WTC11 (cell line): ENCODE measurements at regions of chr10 and their contacts with region 1.

Region 1: DNA sequence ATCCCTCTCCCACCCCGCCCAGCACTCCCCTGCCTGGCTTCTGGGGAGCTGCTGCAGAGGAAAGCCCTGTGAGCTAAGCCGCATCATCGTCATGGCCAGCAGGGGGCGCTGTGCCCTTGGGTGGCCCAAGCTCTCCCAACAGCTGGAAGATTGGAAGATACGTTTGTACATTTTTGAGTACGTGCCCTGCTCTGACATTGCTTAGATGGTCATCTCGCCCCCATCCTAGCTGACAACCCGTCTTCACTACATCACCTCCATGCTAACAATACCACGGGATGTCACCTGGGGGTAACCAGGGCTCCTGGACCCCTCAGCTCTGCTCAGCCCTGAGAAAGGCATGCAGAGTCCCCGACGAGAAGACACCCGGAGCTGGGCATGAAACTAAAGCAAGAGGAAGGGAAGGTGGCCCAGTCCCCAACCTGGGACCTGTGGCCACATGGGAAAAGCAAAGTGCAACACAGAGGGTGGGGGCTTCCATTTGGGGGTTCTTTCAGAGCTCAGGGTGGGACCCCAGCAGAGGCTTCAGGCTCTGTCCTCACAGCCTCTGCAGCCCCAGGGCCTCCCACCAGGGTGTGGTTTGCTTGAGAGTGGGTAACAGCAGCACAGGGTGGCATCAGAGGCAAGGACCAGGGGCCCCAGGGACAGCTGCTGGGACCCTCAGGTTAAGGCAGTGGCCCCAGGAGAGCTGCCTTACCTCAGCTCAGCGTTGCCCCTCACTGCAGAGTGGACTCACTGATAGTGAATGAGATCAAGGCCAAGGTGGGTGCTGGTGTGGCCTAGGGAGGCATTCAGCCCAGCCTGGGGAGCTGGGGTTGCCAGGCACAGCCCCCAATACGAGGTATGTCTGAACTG is 136.7 kb downstream of the PTPN20 start:
- DNase-seq: peak; percentile 86
- ATAC-seq: peak; percentile 77
- H3K4me3 Mint-ChIP-seq: no peak overlapping the region
- H3K27ac Mint-ChIP-seq: peak overlapping the region; percentile 32; the same call in 1 of the 2 replicates
- H3K4me1 Mint-ChIP-seq: no peaks in the 10 kb centered on the region
- H3K27me3 Mint-ChIP-seq: no peaks in the 10 kb centered on the region; the same call in 1 of the 2 replicates
- CTCF ChIP-seq: peak; percentile 96

Region 2: GRCh38 chr10:46992803-46993561 is 54.9 kb before region 1 on chr10:
- CTCF ChIA-PET with region 1: interaction called, 51 read pairs
- POLR2A ChIA-PET with region 1: no interaction called
- DNase-seq: no peak
- ATAC-seq: peak; percentile 93
- H3K4me3 Mint-ChIP-seq: no peak overlapping the region
- H3K27ac Mint-ChIP-seq: no peak overlapping the region
- H3K4me1 Mint-ChIP-seq: peaks cover 23% of the 10 kb centered on the region
- H3K27me3 Mint-ChIP-seq: no peaks in the 10 kb centered on the region
- CTCF ChIP-seq: no peak

Region 3: DNA sequence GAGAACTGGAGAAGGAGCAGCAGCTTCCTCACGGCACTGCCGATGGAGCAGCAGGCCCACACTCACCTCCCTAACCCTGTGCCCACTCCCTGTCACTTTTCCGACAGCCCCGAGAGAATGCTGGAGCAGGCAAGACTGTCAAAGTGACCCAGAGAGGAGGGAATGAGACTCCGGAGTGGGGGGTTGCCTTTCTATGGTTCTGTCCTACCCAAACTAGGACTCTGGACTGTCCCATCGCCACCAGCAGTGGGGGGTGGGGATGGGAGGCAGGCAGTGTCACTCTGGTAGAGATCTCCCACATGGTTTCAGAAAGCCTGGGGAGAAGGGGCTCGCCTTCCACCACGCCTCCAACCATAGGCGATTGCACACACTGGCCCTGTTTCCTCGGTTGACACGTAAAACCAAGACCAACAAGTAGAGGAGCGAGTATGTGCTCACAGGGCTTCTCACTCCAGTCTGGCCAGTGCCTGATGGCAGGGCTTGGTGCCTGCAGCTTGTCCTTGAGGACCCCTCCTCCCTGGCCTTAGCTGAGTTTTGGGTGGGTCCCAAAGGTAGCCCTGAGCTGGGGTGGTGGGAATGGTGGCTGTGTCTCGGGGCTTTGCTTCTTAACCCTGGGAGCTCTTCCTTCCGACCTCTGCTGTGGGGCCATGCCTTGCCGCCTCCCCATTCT is 11.8 kb after region 1 on chr10:
- CTCF ChIA-PET with region 1: interaction called, 15 read pairs
- POLR2A ChIA-PET with region 1: no interaction called
- DNase-seq: no peak
- ATAC-seq: no peak
- H3K4me3 Mint-ChIP-seq: no peak overlapping the region
- H3K27ac Mint-ChIP-seq: no peak overlapping the region
- H3K4me1 Mint-ChIP-seq: no peaks in the 10 kb centered on the region
- H3K27me3 Mint-ChIP-seq: peaks cover 4% of the 10 kb centered on the region; the same call in 1 of the 2 replicates
- CTCF ChIP-seq: no peak

Region 4: GRCh38 chr10:47225219-47225927 is 177.5 kb after region 1 on chr10:
- CTCF ChIA-PET with region 1: interaction called, 19 read pairs
- POLR2A ChIA-PET with region 1: no interaction called
- DNase-seq: peak; percentile 29
- ATAC-seq: peak; percentile 73
- H3K4me3 Mint-ChIP-seq: no peak overlapping the region
- H3K27ac Mint-ChIP-seq: no peak overlapping the region
- H3K4me1 Mint-ChIP-seq: peaks cover 3% of the 10 kb centered on the region
- H3K27me3 Mint-ChIP-seq: no peaks in the 10 kb centered on the region
- CTCF ChIP-seq: no peak

Region 5: GRCh38 chr10:47287365-47287802 is 239.5 kb after region 1 on chr10:
- CTCF ChIA-PET with region 1: interaction called, 26 read pairs
- POLR2A ChIA-PET with region 1: no interaction called
- DNase-seq: no peak
- ATAC-seq: no peak
- H3K4me3 Mint-ChIP-seq: no peak overlapping the region
- H3K27ac Mint-ChIP-seq: no peak overlapping the region
- H3K4me1 Mint-ChIP-seq: no peaks in the 10 kb centered on the region
- H3K27me3 Mint-ChIP-seq: 0 out of 2 replicates have a peak, but pooled peaks cover 3% of the 10 kb centered on the region
- CTCF ChIP-seq: no peak

Region 6: DNA sequence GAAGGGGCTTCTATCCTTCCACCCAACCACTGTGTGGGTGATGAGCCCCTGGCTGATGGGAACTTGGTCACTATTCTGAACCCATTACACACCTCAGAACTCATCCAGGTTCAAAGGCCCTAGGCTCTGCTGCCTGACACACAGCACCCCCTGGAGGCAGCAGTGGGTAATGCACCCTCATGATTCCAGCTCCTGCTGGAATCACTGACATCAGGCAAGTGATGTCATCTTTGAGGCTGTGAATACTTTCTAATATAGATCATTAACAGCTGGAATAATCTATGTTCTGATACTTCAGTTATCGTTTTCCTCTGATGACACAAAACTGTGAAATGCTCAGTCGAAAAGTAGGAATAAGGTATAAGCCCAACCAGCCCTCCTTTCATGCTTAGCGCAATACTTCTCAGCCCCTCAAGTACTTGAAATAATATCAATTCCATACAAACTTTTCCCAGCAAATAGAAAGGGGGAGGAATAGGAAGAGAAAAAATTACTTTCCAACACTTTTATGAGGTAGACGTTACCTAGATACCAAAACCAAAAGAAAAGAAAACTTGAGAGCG is 292.8 kb after region 1 on chr10:
- CTCF ChIA-PET with region 1: interaction called, 13 read pairs
- POLR2A ChIA-PET with region 1: no interaction called
- DNase-seq: peak; percentile 86
- ATAC-seq: peak; percentile 83
- H3K4me3 Mint-ChIP-seq: no peak overlapping the region
- H3K27ac Mint-ChIP-seq: no peak overlapping the region
- H3K4me1 Mint-ChIP-seq: peaks cover 21% of the 10 kb centered on the region
- H3K27me3 Mint-ChIP-seq: no peaks in the 10 kb centered on the region
- CTCF ChIP-seq: peak; percentile 97